SK-N-SH (cell line): ENCODE measurements at regions of chr1 and their contacts with region 1.

Region 1: GRCh38 chr1:159132271-159132881 is 39.0 kb upstream of the CADM3 start:
- DNase-seq: peak; percentile 47
- H3K4me3 ChIP-seq: no peak overlapping the region; a peak in 1 of 4 replicates
- H3K27ac ChIP-seq: no peak overlapping the region
- H3K4me1 ChIP-seq: no peaks in the 10 kb centered on the region
- H3K27me3 ChIP-seq: peaks cover 23% of the 10 kb centered on the region; the same call in 1 of the 2 replicates
- CTCF ChIP-seq: peak; percentile 97
- EP300 ChIP-seq: no peak
- RAD21 ChIP-seq: peak; percentile 86

Region 2: GRCh38 chr1:159161001-159161718 is 28.8 kb after region 1 on chr1:
- CTCF ChIA-PET with region 1: interaction called, 42 read pairs
- POLR2A ChIA-PET with region 1: no interaction called
- DNase-seq: peak; percentile 64
- H3K4me3 ChIP-seq: peak overlapping the region in 1 of 2 experiments; percentile 43; a peak in 1 of 4 replicates
- H3K27ac ChIP-seq: peak overlapping the region in 1 of 2 experiments; percentile 38; a peak in 1 of 4 replicates
- H3K4me1 ChIP-seq: peaks cover 0 to 12% of the 10 kb centered on the region in 2 experiments; a peak in 2 of 4 replicates
- H3K27me3 ChIP-seq: no peaks in the 10 kb centered on the region; the same call in 1 of the 2 replicates
- CTCF ChIP-seq: peak; percentile 100
- EP300 ChIP-seq: no peak
- RAD21 ChIP-seq: peak; percentile 100

Region 3: DNA sequence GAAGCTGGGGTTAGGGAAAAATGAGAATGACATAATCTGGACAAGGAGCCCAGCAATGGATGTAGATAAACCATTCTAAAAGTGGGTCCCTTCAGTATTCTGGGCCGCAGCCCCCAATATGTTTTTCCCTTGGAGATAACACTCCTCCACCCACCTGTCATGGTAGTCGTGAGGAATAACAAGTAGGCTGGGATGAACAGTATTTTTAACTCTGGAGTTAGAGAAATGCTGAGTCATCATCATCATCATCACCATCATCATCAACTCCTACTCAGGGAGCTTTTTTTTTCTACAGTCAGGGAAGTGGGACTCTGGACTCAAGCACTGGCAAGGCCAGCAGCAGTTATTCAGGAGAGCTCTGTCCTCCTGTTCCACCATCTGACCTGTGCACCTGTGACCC is 51.8 kb after region 1 on chr1:
- CTCF ChIA-PET with region 1: interaction called, 11 read pairs
- POLR2A ChIA-PET with region 1: no interaction called
- DNase-seq: no peak
- H3K4me3 ChIP-seq: no peak overlapping the region
- H3K27ac ChIP-seq: no peak overlapping the region
- H3K4me1 ChIP-seq: no peaks in the 10 kb centered on the region
- H3K27me3 ChIP-seq: no peaks in the 10 kb centered on the region; the same call in 1 of the 2 replicates
- CTCF ChIP-seq: no peak
- EP300 ChIP-seq: no peak
- RAD21 ChIP-seq: no peak

Region 4: GRCh38 chr1:159223004-159223403 is 90.6 kb after region 1 on chr1:
- CTCF ChIA-PET with region 1: interaction called, 481 read pairs
- POLR2A ChIA-PET with region 1: no interaction called
- DNase-seq: no peak
- H3K4me3 ChIP-seq: no peak overlapping the region
- H3K27ac ChIP-seq: no peak overlapping the region
- H3K4me1 ChIP-seq: no peaks in the 10 kb centered on the region
- H3K27me3 ChIP-seq: no peaks in the 10 kb centered on the region; the same call in 1 of the 2 replicates
- CTCF ChIP-seq: no peak
- EP300 ChIP-seq: no peak
- RAD21 ChIP-seq: no peak